Activated CD4-positive, alpha-beta memory T cell treated with anti-CD3 and anti-CD28 coated beads for 36 hours (primary cell): ENCODE measurements at regions of chr5 and their contacts with region 1.

Region 1: GRCh38 chr5:178146020-178146820 is 7.5 kb downstream of the NHP2 start:
- DNase-seq: peak; percentile 80
- H3K4me3 Mint-ChIP-seq: no peak overlapping the region
- H3K27ac Mint-ChIP-seq: peak overlapping the region; percentile 56
- H3K4me1 Mint-ChIP-seq: peaks cover 42% of the 10 kb centered on the region
- H3K27me3 Mint-ChIP-seq: no peaks in the 10 kb centered on the region

Region 2: DNA sequence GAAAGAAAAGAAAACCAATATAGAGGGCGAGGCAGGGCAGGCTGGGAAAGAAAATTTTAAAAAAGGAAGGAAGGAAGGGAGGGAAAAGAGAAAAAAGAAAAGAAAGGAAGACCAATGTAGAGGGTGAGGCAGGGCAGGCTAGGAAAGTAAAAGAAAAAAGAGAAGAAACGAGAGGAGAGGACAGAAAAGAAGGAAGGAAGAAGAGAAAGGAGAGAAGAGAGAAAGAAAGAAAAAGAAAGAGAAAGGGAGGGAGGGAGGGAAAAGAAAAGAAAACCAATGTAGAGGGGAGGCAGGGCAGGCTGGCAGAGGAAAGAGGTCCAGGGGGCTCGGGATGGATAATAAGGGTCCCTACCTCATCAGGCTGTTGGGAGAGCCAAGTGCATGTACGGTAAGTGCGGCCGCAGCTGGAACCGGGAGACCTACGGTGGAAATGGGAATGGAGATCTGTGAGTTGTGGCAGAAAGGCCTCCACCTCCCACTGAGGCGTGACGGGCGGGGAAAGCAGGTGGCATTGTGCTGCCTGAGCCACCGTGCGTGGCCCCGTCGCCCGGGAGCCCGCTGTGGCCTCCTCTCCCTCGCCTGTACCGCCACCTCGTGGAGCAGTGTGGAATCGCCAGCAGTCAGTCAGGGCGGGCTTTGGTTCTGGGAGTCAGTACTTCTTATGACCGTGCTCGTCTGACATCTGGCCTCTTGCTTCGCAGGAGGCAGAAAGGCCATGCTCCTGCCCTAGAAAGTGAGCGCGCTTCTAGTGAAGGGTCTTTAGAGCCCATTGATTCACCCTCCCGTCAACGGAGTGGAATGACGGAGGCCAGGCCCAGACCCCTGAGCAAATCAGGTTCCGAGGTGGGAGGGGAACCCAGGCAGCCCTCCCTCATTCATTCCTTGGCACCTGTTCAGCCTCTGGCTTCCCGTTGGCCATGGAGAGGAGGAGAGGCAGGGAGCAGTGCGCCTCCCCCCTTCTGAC is 17.8 kb after region 1 on chr5:
- CTCF ChIA-PET with region 1: interaction called, 6 read pairs
- POLR2A ChIA-PET with region 1: interaction called, 3 read pairs
- intact Hi-C with region 1: loop called (anchors 1 kb)
- DNase-seq: peak; percentile 94
- H3K4me3 Mint-ChIP-seq: peak overlapping the region; percentile 23
- H3K27ac Mint-ChIP-seq: no peak overlapping the region
- H3K4me1 Mint-ChIP-seq: peaks cover 5% of the 10 kb centered on the region
- H3K27me3 Mint-ChIP-seq: peaks cover 11% of the 10 kb centered on the region

Region 3: DNA sequence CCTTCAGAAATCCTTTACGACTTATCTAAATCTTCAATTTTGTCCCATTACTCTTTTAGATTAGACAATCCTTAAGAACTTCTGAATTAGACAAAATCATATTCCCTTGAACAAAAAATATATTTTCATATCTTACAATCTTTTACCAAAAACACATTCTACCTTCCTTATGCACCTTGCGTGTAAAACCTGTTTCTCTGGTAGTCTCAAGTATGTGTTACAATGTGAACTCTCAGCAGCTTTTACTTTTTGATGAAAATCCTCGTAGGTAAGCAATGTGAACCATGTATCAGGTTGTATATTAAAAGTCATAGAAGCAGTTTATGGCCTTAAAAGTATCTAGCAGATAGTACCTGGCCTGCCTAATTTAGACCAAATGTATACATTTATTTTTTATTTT is 28.2 kb after region 1 on chr5:
- CTCF ChIA-PET with region 1: no interaction called
- POLR2A ChIA-PET with region 1: no interaction called
- intact Hi-C with region 1: no loop called
- DNase-seq: no peak
- H3K4me3 Mint-ChIP-seq: no peak overlapping the region
- H3K27ac Mint-ChIP-seq: no peak overlapping the region
- H3K4me1 Mint-ChIP-seq: no peaks in the 10 kb centered on the region
- H3K27me3 Mint-ChIP-seq: peaks cover 4% of the 10 kb centered on the region